ENCODE measurements at regions of chr2 and their contacts with region 1.

Region 1: DNA sequence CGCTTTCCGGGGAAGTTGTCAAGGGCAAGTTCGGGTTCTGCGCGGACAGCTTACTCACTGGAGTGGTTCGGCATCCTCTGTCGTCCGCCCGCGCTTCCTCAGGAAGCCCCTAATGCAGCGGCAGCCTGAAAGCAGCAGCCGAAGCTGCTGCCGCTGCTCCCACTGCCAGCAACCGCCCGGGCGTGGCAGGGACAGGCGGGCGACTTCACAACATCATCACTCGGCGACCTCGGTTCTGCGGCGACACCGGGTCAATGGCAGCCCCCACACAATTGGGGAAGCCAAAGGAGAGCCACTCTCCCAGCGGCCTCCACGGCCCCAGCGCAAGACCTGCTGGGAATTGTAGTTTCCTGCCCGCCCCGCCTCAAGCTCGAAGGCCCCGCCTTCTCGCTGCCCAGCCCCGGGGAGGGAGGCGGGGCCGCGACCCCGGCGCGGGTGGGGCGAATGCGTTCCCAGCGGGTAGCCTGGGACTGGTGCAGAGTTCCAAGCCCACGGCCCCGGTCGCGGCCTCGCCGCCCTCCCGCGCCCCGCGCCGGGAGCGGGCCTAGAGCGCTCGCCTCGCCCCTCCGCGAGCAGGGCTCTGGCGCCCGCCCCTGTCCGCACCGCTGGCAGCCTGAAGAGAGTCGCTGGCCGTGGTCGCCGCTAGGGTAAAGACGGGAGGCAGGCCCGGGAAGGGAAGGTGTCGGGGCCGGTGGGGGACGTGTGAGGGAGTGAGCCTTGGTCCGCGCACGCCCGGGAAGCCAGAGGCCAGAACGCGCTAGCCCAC is at the starts of genes STRADB and TRAK2:
- DNase-seq: peak; percentile 90 to 97 (median 94)
- ATAC-seq: peak; percentile 85 to 87
- H3K4me3 Mint-ChIP-seq: peak within 1 kb of the TSS; percentile 67 to 98 (median 95)
- H3K27ac Mint-ChIP-seq: peak within 1 kb of the TSS; percentile 84 to 98 (median 96)
- H3K4me1 Mint-ChIP-seq: peaks cover 19 to 57% (median 50%) of the 10 kb centered on the region in 4 donors
- H3K27me3 Mint-ChIP-seq: no peaks in the 10 kb centered on the region
- polyA plus RNA-seq, gene STRADB: 31.5 to 33.8 (median 33.5) TPM
- polyA plus RNA-seq, gene TRAK2: 20.9 to 30.7 (median 24.7) TPM

Region 2: DNA sequence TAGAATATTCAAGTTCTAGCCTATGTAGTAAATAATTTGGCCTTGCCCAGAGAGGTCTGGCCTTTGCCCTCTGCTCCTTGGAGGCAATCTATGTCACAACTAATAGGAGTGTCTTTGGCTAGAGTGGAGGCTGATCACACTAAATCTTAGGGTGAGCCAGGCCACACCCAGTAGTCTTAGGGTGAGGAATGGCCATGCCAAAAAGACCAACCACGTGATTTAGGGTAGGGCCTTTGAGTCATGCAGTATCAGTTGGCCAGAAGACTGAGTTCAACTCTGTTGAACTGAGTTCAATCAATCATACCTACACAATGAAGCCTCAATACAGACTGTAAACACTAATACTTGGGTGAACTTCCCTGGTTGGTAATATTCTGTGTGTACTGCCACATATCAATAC is 68.3 kb before region 1 on chr2:
- POLR2A ChIA-PET with region 1: no interaction called
- DNase-seq: no peak
- ATAC-seq: no peak
- H3K4me3 Mint-ChIP-seq: no peak overlapping the region
- H3K27ac Mint-ChIP-seq: no peak overlapping the region
- H3K4me1 Mint-ChIP-seq: peaks cover 0 to 2% (median 1%) of the 10 kb centered on the region in 4 donors
- H3K27me3 Mint-ChIP-seq: no peaks in the 10 kb centered on the region

Region 3: GRCh38 chr2:201414099-201415023 is 37.1 kb before region 1 on chr2:
- POLR2A ChIA-PET with region 1: interaction called, 12 read pairs
- DNase-seq: peak in 3 of 10 donors; percentile 21 to 40 (median 39)
- ATAC-seq: peak; percentile 85 to 86
- H3K4me3 Mint-ChIP-seq: no peak overlapping the region
- H3K27ac Mint-ChIP-seq: no peak overlapping the region
- H3K4me1 Mint-ChIP-seq: peaks cover 11 to 33% (median 21%) of the 10 kb centered on the region in 4 donors
- H3K27me3 Mint-ChIP-seq: no peaks in the 10 kb centered on the region

Region 4: DNA sequence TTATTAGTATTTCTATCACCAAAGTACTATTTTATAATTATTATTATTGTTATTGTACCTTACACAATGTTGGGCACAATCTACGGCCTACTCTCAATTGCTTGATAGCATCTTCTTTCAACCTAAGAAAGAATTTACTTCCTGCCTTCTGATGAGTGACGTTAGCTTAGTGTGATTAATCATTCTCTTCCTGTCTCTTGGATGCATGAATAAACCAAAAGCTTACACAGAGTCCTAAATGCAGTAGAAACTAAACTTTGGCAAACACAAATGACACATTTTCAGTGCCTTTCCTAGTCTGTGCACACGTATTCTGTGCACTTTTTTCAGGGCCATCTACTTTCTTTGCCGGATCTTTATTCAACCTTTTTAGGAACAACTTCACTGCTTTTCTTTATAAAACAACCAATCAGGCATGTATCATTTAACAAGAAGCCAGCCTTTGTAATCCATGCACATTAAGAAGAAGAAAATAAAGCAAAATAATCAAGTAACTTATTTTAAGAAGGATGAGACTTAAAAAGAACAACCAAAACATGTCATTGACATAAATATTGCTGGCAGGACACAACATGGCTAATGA is 19.3 kb before region 1 on chr2:
- POLR2A ChIA-PET with region 1: interaction called, 15 read pairs
- DNase-seq: peak in 2 of 10 donors; percentile 45 to 48
- ATAC-seq: peak; percentile 89 to 99
- H3K4me3 Mint-ChIP-seq: peak overlapping the region in 8 of 10 donors; percentile 8 to 68 (median 58)
- H3K27ac Mint-ChIP-seq: peak overlapping the region in 9 of 10 donors; percentile 18 to 97 (median 84)
- H3K4me1 Mint-ChIP-seq: peaks cover 18 to 65% (median 51%) of the 10 kb centered on the region in 4 donors
- H3K27me3 Mint-ChIP-seq: no peaks in the 10 kb centered on the region

Region 5: GRCh38 chr2:201780674-201781581 is 329.5 kb after region 1 on chr2 and contains the start of gene ALS2:
- POLR2A ChIA-PET with region 1: interaction called, 11 read pairs
- DNase-seq: peak; percentile 88 to 99 (median 95)
- ATAC-seq: peak; percentile 87 to 91
- H3K4me3 Mint-ChIP-seq: peak within 1 kb of the TSS; percentile 93 to 100 (median 97)
- H3K27ac Mint-ChIP-seq: peak within 1 kb of the TSS; percentile 94 to 100 (median 99)
- H3K4me1 Mint-ChIP-seq: peaks cover 11 to 29% (median 27%) of the 10 kb centered on the region in 4 donors
- H3K27me3 Mint-ChIP-seq: peaks cover 0 to 6% (median 1%) of the 10 kb centered on the region in 5 donors
- polyA plus RNA-seq, gene ALS2: 3.7 to 5.2 (median 4.0) TPM

Measured in naive thymus-derived CD8-positive, alpha-beta T cell (primary cell).